ENCODE measurements at regions of chr7 and their contacts with region 1.

Region 1: DNA sequence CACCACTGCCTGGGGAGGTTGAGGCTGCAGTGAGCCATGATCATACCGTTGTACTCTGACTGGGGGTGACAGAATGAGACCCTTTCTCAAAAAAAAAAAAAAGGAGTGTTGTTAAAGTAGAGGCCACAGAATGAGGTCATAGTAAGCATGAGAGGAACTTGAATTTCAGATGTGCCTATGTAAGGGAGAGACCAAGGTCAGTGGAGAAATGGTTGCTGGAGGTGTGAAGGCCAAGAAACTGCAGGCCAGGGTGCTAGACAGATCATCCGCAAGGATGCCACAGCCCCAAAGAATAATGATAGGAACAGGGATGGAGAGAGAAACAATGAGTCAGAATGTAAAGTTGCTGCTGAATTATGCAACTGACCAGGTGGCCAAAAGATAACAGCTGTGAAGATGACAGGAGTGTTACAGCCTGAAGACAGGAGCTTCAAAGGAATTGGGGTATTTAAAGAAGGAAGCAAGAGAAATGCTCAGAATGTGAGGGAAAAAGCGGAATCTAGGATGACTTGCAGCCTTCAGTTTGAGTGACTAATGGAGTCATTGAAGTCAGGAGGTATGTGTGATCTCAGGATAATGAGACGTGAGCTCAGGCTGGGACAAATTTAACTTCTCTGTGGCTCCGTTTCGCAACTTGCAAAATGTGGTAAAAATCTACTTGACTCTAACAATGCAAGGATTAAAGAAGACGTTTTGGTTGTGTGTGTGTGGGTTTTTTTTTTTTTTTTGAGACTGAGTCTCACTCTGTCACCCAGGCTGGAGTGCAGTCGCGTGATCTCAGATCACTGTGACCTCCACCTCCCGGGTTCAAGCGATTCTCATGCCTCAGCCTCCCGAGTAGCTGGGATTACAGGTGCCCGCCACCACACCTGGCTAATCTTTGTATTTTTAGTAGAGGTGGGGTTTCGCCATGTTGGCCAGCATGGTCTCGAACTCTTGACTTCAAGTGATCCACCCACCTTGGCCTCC is 22.2 kb downstream of the TYW1B start:
- DNase-seq: peak; percentile 63 to 77
- H3K4me3 ChIP-seq: no peak overlapping the region
- H3K4me3 Mint-ChIP-seq: peak overlapping the region; percentile 10
- H3K27ac Mint-ChIP-seq: peak overlapping the region; percentile 76
- H3K4me1 ChIP-seq: peaks cover 7% of the 10 kb centered on the region
- H3K4me1 Mint-ChIP-seq: peaks cover 10% of the 10 kb centered on the region
- H3K27me3 ChIP-seq: no peaks in the 10 kb centered on the region
- H3K27me3 Mint-ChIP-seq: no peaks in the 10 kb centered on the region
- CTCF ChIP-seq: no peak

Region 2: GRCh38 chr7:72217151-72217550 is 588.7 kb before region 1 on chr7:
- CTCF ChIA-PET with region 1: no interaction called
- POLR2A ChIA-PET with region 1: no interaction called
- intact Hi-C with region 1: no loop called
- DNase-seq: no peak
- H3K4me3 ChIP-seq: no peak overlapping the region
- H3K4me3 Mint-ChIP-seq: no peak overlapping the region
- H3K27ac Mint-ChIP-seq: no peak overlapping the region
- H3K4me1 ChIP-seq: no peaks in the 10 kb centered on the region
- H3K4me1 Mint-ChIP-seq: no peaks in the 10 kb centered on the region
- H3K27me3 ChIP-seq: no peaks in the 10 kb centered on the region
- H3K27me3 Mint-ChIP-seq: no peaks in the 10 kb centered on the region
- CTCF ChIP-seq: no peak

Region 3: DNA sequence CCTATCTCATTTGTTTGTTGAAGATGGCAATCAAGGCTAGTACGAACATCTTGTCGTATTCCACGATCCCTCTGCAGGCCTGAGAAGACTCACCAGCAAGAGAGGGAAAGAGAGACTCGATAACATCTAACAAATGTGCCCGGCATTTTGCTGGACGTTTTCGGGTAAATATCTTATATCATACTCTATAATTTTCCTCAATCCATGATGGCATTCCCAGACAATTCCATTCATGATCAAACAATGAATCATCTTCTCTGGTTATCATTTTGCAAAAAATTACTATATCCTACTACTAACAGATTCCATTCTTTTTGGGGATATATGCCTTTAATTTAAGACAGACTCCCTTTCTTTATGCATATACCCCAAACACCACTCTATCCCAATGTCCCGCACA is 95.9 kb before region 1 on chr7:
- CTCF ChIA-PET with region 1: no interaction called
- POLR2A ChIA-PET with region 1: no interaction called
- intact Hi-C with region 1: no loop called
- DNase-seq: no peak
- H3K4me3 ChIP-seq: no peak overlapping the region
- H3K4me3 Mint-ChIP-seq: no peak overlapping the region
- H3K27ac Mint-ChIP-seq: no peak overlapping the region
- H3K4me1 ChIP-seq: no peaks in the 10 kb centered on the region
- H3K4me1 Mint-ChIP-seq: peaks cover 13% of the 10 kb centered on the region
- H3K27me3 ChIP-seq: no peaks in the 10 kb centered on the region
- H3K27me3 Mint-ChIP-seq: no peaks in the 10 kb centered on the region
- CTCF ChIP-seq: no peak

Region 4: DNA sequence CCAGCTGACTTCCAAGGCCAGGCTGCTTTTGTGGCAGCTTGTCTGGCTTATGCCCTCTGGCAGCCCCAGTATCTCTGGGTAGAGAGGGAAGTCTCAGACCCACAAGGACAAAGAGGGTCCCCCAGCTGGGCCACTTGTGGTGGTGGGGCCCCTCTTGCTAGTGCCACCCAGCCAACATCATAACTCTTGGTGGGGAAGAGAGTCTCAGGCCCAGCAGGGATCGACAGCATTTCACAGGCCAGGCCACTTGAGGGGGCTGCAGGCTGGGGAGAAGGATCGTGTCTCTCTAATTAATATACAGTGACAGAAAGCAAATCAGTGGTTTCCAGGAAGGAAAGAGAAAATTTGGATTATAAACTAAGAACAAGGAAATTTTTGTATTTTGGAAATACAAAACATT is 53.8 kb before region 1 on chr7:
- CTCF ChIA-PET with region 1: no interaction called
- POLR2A ChIA-PET with region 1: no interaction called
- intact Hi-C with region 1: loop called (anchors 10 kb)
- DNase-seq: peak in 1 of 2 experiments; percentile 20
- H3K4me3 ChIP-seq: no peak overlapping the region
- H3K4me3 Mint-ChIP-seq: no peak overlapping the region
- H3K27ac Mint-ChIP-seq: no peak overlapping the region
- H3K4me1 ChIP-seq: no peaks in the 10 kb centered on the region
- H3K4me1 Mint-ChIP-seq: peaks cover 6% of the 10 kb centered on the region
- H3K27me3 ChIP-seq: no peaks in the 10 kb centered on the region
- H3K27me3 Mint-ChIP-seq: no peaks in the 10 kb centered on the region
- CTCF ChIP-seq: peak in 1 of 2 experiments; percentile 39